Prostate gland (tissue), 2 donors: ENCODE measurements at regions of chr3 and their contacts with region 1.

Region 1: GRCh38 chr3:51401735-51402134 is 10.7 kb downstream of the RBM15B start:
- DNase-seq: no peak
- H3K4me3 ChIP-seq: no peak overlapping the region
- H3K27ac ChIP-seq: no peak overlapping the region
- H3K4me1 ChIP-seq: no peaks in the 10 kb centered on the region
- H3K27me3 ChIP-seq: no peaks in the 10 kb centered on the region
- CTCF ChIP-seq: no peak
- POLR2A ChIP-seq: no peak

Region 2: DNA sequence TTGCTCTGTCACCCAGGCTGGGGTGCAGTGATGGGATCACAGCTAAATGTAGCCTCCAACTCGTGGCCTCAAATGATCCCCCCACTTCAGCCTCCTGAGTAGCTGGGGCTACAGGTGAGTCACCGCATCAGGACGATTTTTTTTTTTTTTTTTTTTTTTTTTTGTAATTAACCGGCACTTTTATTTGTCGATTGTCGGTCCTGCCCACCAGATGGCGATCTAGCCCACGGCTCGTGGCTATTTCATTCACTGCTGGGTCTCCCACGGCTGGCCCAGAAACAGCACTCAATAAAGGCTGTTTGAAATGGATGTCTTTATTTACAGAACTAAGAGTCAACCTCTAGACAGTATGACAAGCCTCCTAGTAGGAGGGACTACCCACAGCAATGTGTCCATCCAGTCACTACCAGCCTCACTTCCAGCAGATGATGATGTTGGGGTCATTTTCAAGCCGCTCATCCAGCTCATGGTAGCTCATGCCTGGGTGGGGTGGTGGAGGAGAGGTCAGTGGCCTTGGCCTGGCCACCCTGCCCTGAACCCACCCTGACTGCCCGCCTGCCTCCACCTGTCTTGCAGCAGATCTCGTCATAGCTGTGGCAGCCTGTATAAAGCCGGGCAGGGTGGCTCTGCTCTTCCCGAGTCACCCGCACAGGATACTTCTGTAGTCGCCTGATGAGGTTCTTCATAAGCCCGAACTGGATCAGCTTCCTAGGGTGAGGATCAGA is 1054.4 kb before region 1 on chr3:
- intact Hi-C with region 1: loop called (anchors 10 kb)
- DNase-seq: peak; percentile 73
- H3K4me3 ChIP-seq: no peak overlapping the region
- H3K27ac ChIP-seq: peak overlapping the region in 1 of 2 donors; percentile 31
- H3K4me1 ChIP-seq: peaks cover 18% of the 10 kb centered on the region
- H3K27me3 ChIP-seq: no peaks in the 10 kb centered on the region
- CTCF ChIP-seq: peak; percentile 14 to 71 (median 52)
- POLR2A ChIP-seq: no peak

Region 3: GRCh38 chr3:50961386-50961785 is 440.3 kb before region 1 on chr3:
- intact Hi-C with region 1: no loop called
- DNase-seq: no peak
- H3K4me3 ChIP-seq: no peak overlapping the region
- H3K27ac ChIP-seq: no peak overlapping the region
- H3K4me1 ChIP-seq: no peaks in the 10 kb centered on the region
- H3K27me3 ChIP-seq: no peaks in the 10 kb centered on the region
- CTCF ChIP-seq: no peak
- POLR2A ChIP-seq: no peak

Region 4: DNA sequence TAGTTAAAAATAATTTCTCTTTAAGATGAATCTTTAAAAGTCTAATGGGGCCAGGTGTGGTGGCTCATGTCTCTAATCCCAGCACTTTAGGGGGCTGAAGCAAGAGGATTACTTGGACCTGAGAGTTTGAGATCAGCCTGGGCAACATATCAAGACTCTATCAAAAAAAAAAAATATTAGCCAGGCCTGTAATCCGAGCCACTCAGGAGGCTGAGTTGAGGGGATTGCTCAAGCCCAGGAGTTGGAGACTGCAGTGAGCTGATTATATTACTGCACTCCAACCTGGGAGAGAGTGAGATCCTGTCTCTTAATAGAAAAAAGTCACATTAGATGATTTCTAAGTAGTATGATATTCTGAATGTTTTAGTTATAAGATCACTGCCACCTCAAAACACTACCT is 338.7 kb before region 1 on chr3:
- intact Hi-C with region 1: no loop called
- DNase-seq: no peak
- H3K4me3 ChIP-seq: no peak overlapping the region
- H3K27ac ChIP-seq: no peak overlapping the region
- H3K4me1 ChIP-seq: no peaks in the 10 kb centered on the region
- H3K27me3 ChIP-seq: no peaks in the 10 kb centered on the region
- CTCF ChIP-seq: no peak
- POLR2A ChIP-seq: no peak